ENCODE measurements at regions of chr6 and their contacts with region 1.

Region 1: DNA sequence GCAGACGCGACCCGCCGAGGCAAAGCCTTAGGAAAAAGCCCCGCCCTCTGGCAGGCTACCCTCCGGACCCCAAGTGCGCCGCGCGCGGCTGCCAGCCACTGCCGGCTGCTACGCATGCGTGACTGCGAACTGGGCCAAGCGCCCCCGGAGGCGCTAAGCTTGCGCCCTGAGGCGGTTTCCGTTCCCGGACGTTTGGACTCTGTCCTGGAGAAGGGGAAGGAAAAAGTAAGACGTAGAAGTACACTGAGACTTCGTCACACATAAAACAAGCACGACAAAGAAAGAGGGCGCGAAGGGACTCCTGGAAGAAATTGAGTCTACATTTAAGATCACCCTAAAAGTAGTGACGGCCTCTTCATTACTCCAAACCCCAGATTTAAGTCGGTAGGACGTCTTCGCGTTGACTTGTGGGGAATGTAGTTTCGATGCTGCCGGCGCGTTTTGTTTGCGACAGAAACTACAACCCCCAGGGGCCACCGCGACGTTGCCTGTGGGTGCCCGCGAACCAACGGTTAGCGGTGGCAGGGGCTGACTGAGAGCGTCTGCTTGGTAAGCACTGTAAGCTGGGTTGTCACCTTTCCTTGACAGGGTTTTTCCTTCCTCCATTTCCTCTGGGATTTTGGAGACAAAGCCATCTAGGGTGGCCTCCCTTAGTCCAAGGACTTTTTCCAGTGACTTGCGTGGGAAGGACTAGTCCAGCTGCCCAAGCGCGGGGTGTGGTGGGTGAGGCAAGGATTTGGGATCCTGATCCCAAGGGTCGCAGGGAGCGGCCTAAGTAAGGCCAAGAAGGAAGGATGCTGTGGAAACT is at the start of gene CEP57L1:
- DNase-seq: peak; percentile 98
- H3K4me3 ChIP-seq: peak within 1 kb of the TSS; percentile 49 to 80 (median 67)
- H3K27ac ChIP-seq: peak within 1 kb of the TSS; percentile 95 to 100 (median 99)
- H3K4me1 ChIP-seq: peaks cover 7 to 57% (median 34%) of the 10 kb centered on the region in 4 donors
- H3K27me3 ChIP-seq: no peaks in the 10 kb centered on the region
- CTCF ChIP-seq: peak in 2 of 5 experiments; percentile 11 to 27
- EP300 ChIP-seq: no peak
- POLR2A ChIP-seq: peak; percentile 12
- total RNA-seq, gene CEP57L1: 1.9 to 29.5 (median 9.5) TPM

Region 2: GRCh38 chr6:107957909-107958688 is 1137.1 kb before region 1 on chr6 and contains the start of gene SEC63:
- in situ Hi-C with region 1: loop called in 1 of 4 experiments (anchors 25 kb)
- intact Hi-C with region 1: no loop called
- DNase-seq: peak; percentile 98
- H3K4me3 ChIP-seq: peak within 1 kb of the TSS; percentile 60 to 91 (median 84)
- H3K27ac ChIP-seq: peak within 1 kb of the TSS; percentile 93 to 96 (median 94)
- H3K4me1 ChIP-seq: peaks cover 8 to 35% (median 18%) of the 10 kb centered on the region in 4 donors
- H3K27me3 ChIP-seq: no peaks in the 10 kb centered on the region
- CTCF ChIP-seq: peak in 2 of 5 experiments; percentile 0 to 11
- EP300 ChIP-seq: no peak
- POLR2A ChIP-seq: peak; percentile 96
- total RNA-seq, gene SEC63: 24.6 to 50.3 (median 28.5) TPM